ENCODE measurements at regions of chr4 and their contacts with region 1.

Region 1: GRCh38 chr4:48578132-48578968 is 88.3 kb downstream of the ZAR1 start:
- DNase-seq: peak; percentile 80
- H3K4me3 Mint-ChIP-seq: no peak overlapping the region
- H3K27ac Mint-ChIP-seq: peak overlapping the region; percentile 70
- H3K4me1 Mint-ChIP-seq: no peaks in the 10 kb centered on the region
- H3K27me3 Mint-ChIP-seq: no peaks in the 10 kb centered on the region
- CTCF ChIP-seq: peak; percentile 78

Region 2: GRCh38 chr4:48518143-48518542 is 60.2 kb before region 1 on chr4:
- CTCF ChIA-PET with region 1: no interaction called
- POLR2A ChIA-PET with region 1: no interaction called
- intact Hi-C with region 1: no loop called
- DNase-seq: no peak
- H3K4me3 Mint-ChIP-seq: no peak overlapping the region
- H3K27ac Mint-ChIP-seq: no peak overlapping the region
- H3K4me1 Mint-ChIP-seq: no peaks in the 10 kb centered on the region
- H3K27me3 Mint-ChIP-seq: no peaks in the 10 kb centered on the region
- CTCF ChIP-seq: no peak

Region 3: GRCh38 chr4:48591372-48591771 is 13.0 kb after region 1 on chr4:
- CTCF ChIA-PET with region 1: interaction called, 16 read pairs
- POLR2A ChIA-PET with region 1: no interaction called
- intact Hi-C with region 1: no loop called
- DNase-seq: no peak
- H3K4me3 Mint-ChIP-seq: no peak overlapping the region
- H3K27ac Mint-ChIP-seq: no peak overlapping the region
- H3K4me1 Mint-ChIP-seq: no peaks in the 10 kb centered on the region
- H3K27me3 Mint-ChIP-seq: no peaks in the 10 kb centered on the region
- CTCF ChIP-seq: no peak

Region 4: DNA sequence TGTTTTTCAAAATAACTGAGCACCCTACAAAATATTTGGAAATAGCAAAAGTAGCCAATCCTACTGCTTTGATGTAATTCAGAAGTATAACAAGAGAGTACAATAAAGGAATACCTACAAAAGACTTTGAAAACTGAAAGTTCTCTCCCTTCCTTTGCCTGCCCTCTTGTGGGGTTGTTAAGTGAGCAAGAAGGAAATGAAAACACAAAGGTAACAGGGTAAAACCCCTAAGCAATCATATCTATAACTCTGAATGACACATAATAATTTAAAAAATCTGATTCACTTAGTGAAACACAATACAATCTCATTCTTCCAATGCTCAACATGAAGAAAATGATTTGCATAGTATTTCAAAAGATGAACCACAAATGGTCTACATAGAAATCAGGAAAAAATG is 103.5 kb after region 1 on chr4:
- CTCF ChIA-PET with region 1: interaction called, 21 read pairs
- POLR2A ChIA-PET with region 1: interaction called, 5 read pairs
- intact Hi-C with region 1: loop called (anchors 1 kb)
- DNase-seq: peak; percentile 45
- H3K4me3 Mint-ChIP-seq: no peak overlapping the region
- H3K27ac Mint-ChIP-seq: no peak overlapping the region
- H3K4me1 Mint-ChIP-seq: peaks cover 12% of the 10 kb centered on the region
- H3K27me3 Mint-ChIP-seq: no peaks in the 10 kb centered on the region
- CTCF ChIP-seq: peak; percentile 29

Region 5: DNA sequence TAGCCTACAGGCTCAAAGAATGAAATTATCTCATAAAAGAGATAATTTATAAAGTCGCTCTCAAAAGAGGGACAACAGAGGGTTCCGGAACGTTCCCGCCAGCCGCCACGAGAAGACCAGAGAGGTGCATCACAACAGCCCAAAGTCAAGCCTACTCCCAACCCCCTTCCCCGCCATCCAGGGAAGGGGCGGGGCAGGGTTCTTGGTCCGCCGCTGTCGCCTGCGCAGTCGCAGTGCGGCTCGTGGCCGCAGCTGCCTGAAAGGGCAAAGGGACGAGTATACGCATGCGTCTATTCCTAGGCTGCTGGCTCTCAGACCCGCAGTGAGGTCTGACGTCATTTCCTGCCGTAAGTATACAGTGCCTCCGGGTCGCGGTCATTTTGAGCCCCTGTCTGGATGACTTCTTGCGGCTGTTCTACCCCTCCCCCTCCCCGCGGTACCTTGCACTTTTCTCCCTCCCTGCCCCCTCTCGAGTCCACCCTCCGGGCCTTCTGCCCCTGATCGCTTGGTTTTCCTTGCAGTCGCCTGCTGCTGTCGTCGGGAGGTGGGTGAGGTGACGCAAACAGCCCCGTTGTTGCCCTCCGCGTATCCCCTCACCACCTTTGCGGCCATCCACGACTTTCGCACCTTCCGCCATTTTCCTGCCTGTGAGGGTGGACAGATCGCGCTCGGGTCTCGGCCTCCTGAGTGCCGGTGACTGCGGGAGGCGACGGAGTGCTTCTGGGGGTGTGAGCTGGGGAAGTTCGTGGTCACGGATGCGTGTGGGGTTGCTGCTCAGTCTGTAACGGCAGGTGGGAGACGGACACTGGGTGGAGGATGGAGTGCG is 252.6 kb after region 1 on chr4 and contains the start of gene OCIAD1:
- CTCF ChIA-PET with region 1: no interaction called
- POLR2A ChIA-PET with region 1: interaction called, 5 read pairs
- intact Hi-C with region 1: loop called (anchors 2 kb)
- DNase-seq: peak; percentile 99
- H3K4me3 Mint-ChIP-seq: peak within 1 kb of the TSS; percentile 95
- H3K27ac Mint-ChIP-seq: peak within 1 kb of the TSS; percentile 97
- H3K4me1 Mint-ChIP-seq: peaks cover 5% of the 10 kb centered on the region
- H3K27me3 Mint-ChIP-seq: no peaks in the 10 kb centered on the region
- CTCF ChIP-seq: no peak
- total RNA-seq, gene OCIAD1: 207 and 224 TPM in 2 replicates

Region 6: GRCh38 chr4:48906206-48907173 is 328.1 kb after region 1 on chr4 and contains the start of gene OCIAD2:
- CTCF ChIA-PET with region 1: interaction called, 3 read pairs
- POLR2A ChIA-PET with region 1: no interaction called
- intact Hi-C with region 1: loop called (anchors 5 kb)
- DNase-seq: peak; percentile 64
- H3K4me3 Mint-ChIP-seq: peak within 1 kb of the TSS; percentile 82
- H3K27ac Mint-ChIP-seq: peak within 1 kb of the TSS; percentile 76
- H3K4me1 Mint-ChIP-seq: peaks cover 40% of the 10 kb centered on the region
- H3K27me3 Mint-ChIP-seq: no peaks in the 10 kb centered on the region
- CTCF ChIP-seq: no peak
- total RNA-seq, gene OCIAD2: 66.3 and 94.1 TPM in 2 replicates

Region 7: GRCh38 chr4:48963042-48963679 is 384.8 kb after region 1 on chr4:
- CTCF ChIA-PET with region 1: interaction called, 11 read pairs
- POLR2A ChIA-PET with region 1: no interaction called
- intact Hi-C with region 1: loop called (anchors 1 kb)
- DNase-seq: peak; percentile 91
- H3K4me3 Mint-ChIP-seq: no peak overlapping the region
- H3K27ac Mint-ChIP-seq: no peak overlapping the region
- H3K4me1 Mint-ChIP-seq: peaks cover 19% of the 10 kb centered on the region
- H3K27me3 Mint-ChIP-seq: no peaks in the 10 kb centered on the region
- CTCF ChIP-seq: peak; percentile 99